ENCODE measurements at regions of chr11 and their contacts with region 1.

Region 1: GRCh38 chr11:122215244-122215992 is 99.4 kb upstream of the BLID start:
- DNase-seq: peak; percentile 37
- H3K4me3 Mint-ChIP-seq: no peak overlapping the region
- H3K27ac Mint-ChIP-seq: no peak overlapping the region
- H3K4me1 Mint-ChIP-seq: no peaks in the 10 kb centered on the region
- H3K27me3 Mint-ChIP-seq: peaks cover 8% of the 10 kb centered on the region

Region 2: DNA sequence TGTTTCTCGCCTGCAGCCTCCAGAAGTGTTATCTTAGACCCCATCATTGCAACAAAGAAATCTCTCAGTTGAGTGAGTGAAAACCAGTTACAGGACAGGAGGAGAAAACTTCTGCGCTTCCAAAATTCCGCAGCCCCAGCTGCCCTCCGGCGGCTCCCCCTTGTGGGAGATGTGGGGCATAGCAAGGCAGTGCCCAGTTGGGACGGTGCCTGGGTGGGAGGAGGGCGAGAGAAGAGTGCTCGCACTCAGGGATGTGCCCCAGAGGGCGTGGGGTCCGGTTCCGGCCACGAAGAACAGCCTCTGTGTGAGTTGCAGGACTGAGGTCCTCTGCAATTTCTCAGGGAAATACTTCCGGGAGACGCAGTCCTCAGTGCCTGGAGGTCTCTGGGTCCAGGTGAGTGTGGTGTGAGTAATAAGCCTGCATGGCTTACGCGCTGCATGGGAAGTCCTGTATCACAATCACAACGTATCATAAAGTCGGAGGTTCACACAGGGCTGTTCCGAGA is 12.4 kb before region 1 on chr11:
- CTCF ChIA-PET with region 1: interaction called, 11 read pairs
- DNase-seq: peak; percentile 57
- H3K4me3 Mint-ChIP-seq: no peak overlapping the region
- H3K27ac Mint-ChIP-seq: no peak overlapping the region
- H3K4me1 Mint-ChIP-seq: no peaks in the 10 kb centered on the region
- H3K27me3 Mint-ChIP-seq: peaks cover 18% of the 10 kb centered on the region

Region 3: GRCh38 chr11:122226810-122227379 is 11.5 kb after region 1 on chr11:
- CTCF ChIA-PET with region 1: interaction called, 10 read pairs
- DNase-seq: no peak
- H3K4me3 Mint-ChIP-seq: no peak overlapping the region
- H3K27ac Mint-ChIP-seq: no peak overlapping the region
- H3K4me1 Mint-ChIP-seq: no peaks in the 10 kb centered on the region
- H3K27me3 Mint-ChIP-seq: peaks cover 4% of the 10 kb centered on the region

Region 4: DNA sequence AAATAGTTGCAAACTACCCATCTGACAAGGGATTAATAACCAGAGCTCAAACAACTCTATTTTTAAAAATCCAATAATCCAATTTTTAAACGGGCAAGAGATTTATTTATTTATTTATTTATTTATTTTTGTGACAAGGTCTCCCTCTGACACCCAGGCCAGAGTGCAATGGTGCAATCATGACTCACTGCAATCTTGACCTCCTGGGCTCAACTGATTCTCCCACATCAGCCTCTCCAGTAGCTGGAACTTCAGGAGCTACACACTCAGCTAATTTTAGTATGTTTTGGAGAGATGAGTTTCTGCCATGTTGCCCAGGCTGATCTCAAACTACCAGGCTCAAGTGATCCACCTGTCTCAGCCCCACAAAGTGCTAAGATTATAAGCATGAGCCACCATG is 167.8 kb after region 1 on chr11:
- CTCF ChIA-PET with region 1: no interaction called
- DNase-seq: no peak
- H3K4me3 Mint-ChIP-seq: no peak overlapping the region
- H3K27ac Mint-ChIP-seq: no peak overlapping the region
- H3K4me1 Mint-ChIP-seq: no peaks in the 10 kb centered on the region
- H3K27me3 Mint-ChIP-seq: no peaks in the 10 kb centered on the region

Region 5: DNA sequence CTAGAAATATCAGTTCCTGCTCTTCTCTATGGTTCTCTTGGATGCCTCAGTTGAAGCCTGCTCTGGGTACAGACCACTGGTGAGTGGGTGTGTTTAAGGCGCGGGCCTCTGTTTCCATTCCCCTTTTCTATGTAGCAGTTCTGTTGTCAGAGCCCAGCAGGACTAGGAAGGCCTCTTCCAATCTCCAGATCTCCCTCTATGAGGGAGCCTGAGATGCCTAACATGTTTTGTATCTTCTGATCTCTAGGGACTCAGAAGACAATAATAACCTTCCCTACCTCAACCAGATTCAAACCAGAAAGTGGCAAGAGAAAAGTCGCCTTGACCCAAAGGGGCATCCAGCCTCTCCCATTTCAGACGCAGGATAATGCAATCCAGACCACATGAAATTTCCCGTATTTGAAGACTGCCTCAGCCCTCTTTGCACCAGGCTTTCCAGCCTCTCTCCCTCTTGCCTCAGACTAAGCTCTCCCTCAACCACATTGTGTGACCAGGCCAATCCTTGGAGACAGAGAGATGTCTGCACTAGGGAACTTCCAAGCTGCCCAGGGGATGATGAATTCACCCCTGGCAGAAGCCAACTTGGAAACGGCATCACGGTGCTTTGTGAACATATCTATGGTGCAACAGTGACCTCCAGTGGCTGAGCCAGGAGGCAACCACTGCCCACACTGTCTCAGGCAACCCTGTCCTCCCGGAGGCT is 290.0 kb after region 1 on chr11:
- CTCF ChIA-PET with region 1: interaction called, 13 read pairs
- DNase-seq: peak; percentile 59
- H3K4me3 Mint-ChIP-seq: no peak overlapping the region
- H3K27ac Mint-ChIP-seq: no peak overlapping the region
- H3K4me1 Mint-ChIP-seq: no peaks in the 10 kb centered on the region
- H3K27me3 Mint-ChIP-seq: peaks cover 10% of the 10 kb centered on the region

Measured in activated naive CD4-positive, alpha-beta T cell treated with anti-CD3 and anti-CD28 coated beads, Interleukin-2, amount 10 ng/mL, durations not matched to agents 7 days and 5 days (primary cell).